ENCODE measurements at regions of chr3 and their contacts with region 1.

Region 1: DNA sequence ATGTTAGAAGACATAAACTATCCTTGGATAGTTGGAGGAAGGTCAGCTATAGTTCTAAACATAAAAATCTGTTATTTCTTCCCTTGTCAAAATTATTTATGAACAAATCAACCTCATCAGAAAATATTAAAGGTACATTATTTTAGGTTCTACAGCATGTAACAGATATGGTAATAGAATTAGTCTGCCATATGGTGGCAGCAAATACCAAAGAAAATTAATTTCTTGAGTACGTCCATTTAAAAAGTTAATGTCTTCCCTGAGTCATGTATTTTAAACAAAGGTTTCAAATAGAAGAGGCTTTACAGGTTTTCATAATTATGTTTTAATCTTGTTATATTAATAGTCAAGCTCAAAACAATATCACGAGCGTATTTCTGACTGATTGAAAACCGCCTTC is 17.9 kb upstream of the ANKRD28 start:
- DNase-seq: no peak
- H3K4me3 Mint-ChIP-seq: no peak overlapping the region
- H3K27ac Mint-ChIP-seq: no peak overlapping the region
- H3K4me1 Mint-ChIP-seq: peaks cover 36% of the 10 kb centered on the region
- H3K27me3 Mint-ChIP-seq: no peaks in the 10 kb centered on the region

Region 2: DNA sequence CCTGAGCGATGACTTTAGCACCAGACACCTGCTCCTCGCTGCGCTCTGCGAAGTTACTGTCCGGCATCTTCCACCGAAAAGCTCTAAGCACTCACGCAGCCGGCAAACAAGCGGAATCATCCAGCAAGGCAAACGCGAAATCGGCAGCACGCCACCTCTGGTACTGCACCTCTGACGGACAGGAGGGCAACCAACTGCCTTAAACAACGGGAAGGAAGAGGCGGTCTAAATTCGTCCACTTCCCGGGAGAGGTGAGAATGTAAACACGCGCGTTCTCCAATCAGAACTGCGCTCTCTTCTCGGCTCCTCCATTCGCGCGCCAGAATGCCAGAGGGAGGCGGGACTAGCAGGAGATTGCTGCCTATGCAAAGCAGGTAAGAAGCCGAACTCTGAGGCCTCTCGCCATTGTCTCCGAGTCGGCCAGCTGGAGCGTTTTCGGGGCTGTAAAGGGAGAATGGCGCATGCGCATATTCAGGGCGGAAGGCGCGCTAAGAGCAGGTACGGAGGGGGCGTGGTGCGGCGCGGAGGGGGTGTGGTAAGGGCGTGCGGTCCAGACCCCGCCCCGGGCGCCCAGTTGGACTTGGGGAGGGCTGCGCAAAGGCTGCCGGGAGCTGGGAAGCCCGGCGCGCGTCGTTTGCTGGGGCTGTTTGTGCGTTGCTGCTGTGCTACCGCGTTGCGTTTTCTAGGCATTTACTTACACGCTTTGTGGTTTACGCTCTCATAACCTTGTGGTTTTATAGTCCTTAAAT is 214.1 kb before region 1 on chr3 and contains the starts of genes BTD and HACL1:
- intact Hi-C with region 1: loop called (anchors 1 kb)
- DNase-seq: peak; percentile 99
- H3K4me3 Mint-ChIP-seq: peak within 1 kb of the TSS; percentile 100
- H3K27ac Mint-ChIP-seq: peak within 1 kb of the TSS; percentile 99
- H3K4me1 Mint-ChIP-seq: peaks cover 28% of the 10 kb centered on the region
- H3K27me3 Mint-ChIP-seq: no peaks in the 10 kb centered on the region
- total RNA-seq, gene BTD: 3.9 and 4.8 TPM in 2 replicates
- total RNA-seq, gene HACL1: 22.8 TPM in 2 replicates

Region 3: DNA sequence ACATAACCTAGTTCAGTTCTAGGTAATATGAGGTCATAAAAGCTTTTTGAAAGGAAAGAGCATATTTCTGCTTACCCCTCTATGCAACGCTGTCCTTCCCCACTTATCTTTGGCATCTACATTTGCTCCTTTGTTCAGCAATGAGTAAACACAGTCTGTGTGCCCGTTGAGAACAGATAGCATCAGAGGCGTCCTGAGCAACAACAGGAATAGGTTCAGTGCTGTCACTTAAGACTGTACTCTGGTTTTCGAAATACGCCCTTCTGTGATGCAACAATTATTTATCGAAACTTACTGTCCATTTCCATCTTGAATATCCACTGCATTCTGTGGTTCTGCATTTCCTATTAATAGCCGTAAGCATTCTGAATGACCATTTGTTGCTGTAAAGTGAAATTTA is 129.8 kb before region 1 on chr3:
- intact Hi-C with region 1: loop called (anchors 5 kb)
- DNase-seq: peak; percentile 20
- H3K4me3 Mint-ChIP-seq: no peak overlapping the region
- H3K27ac Mint-ChIP-seq: no peak overlapping the region
- H3K4me1 Mint-ChIP-seq: peaks cover 35% of the 10 kb centered on the region
- H3K27me3 Mint-ChIP-seq: no peaks in the 10 kb centered on the region

Region 4: GRCh38 chr3:15859507-15860013 is 43.9 kb after region 1 on chr3:
- intact Hi-C with region 1: loop called (anchors 5 kb)
- DNase-seq: peak; percentile 73
- H3K4me3 Mint-ChIP-seq: peak overlapping the region; percentile 94
- H3K27ac Mint-ChIP-seq: peak overlapping the region; percentile 96
- H3K4me1 Mint-ChIP-seq: peaks cover 36% of the 10 kb centered on the region
- H3K27me3 Mint-ChIP-seq: no peaks in the 10 kb centered on the region

Region 5: GRCh38 chr3:15875016-15875689 is 59.5 kb after region 1 on chr3:
- intact Hi-C with region 1: no loop called
- DNase-seq: no peak
- H3K4me3 Mint-ChIP-seq: no peak overlapping the region
- H3K27ac Mint-ChIP-seq: no peak overlapping the region
- H3K4me1 Mint-ChIP-seq: peaks cover 3% of the 10 kb centered on the region
- H3K27me3 Mint-ChIP-seq: no peaks in the 10 kb centered on the region

Region 6: DNA sequence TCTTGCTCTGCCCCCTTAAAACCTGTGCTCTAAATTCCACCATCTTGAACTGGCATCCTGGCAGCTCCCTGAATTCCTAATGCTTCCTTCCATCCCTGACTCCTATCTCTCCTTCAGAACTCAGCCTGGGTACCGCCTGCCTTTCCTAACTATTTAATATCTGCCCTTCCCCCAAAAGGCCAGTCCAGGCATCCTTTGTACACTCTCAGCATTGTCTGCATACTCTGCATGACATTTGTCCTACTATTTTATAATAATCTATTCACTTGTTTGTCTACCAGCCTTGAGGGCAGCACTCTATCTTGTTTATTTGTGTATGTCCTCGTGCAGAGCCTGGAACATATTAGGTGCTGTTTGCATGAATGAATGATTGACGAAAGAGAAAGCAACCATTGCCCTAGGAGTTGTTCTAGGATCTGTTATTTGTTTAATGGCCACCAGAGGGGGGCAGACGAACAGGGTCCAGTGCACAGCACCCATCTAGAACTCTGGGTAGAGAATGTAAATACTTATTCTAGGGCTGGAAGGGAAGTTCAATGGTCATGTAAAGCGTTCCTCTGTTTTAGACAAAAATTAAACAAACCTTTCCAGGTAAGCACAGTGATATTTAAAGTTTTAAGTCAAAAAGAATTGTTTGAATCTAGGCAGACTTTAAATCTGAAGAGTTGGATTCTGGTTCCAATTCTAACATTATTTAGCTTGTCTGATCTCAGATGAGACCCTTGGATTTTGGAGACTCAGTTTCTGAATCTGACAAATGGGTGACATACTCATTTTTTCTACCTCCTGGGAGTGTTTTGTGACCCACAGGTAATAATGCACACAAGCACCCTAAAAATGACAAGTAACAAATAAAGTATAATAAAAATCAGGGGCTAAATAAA is 233.0 kb after region 1 on chr3:
- intact Hi-C with region 1: loop called (anchors 10 kb)
- DNase-seq: peak; percentile 16
- H3K4me3 Mint-ChIP-seq: no peak overlapping the region
- H3K27ac Mint-ChIP-seq: no peak overlapping the region
- H3K4me1 Mint-ChIP-seq: peaks cover 8% of the 10 kb centered on the region
- H3K27me3 Mint-ChIP-seq: peaks cover 2% of the 10 kb centered on the region

Region 7: DNA sequence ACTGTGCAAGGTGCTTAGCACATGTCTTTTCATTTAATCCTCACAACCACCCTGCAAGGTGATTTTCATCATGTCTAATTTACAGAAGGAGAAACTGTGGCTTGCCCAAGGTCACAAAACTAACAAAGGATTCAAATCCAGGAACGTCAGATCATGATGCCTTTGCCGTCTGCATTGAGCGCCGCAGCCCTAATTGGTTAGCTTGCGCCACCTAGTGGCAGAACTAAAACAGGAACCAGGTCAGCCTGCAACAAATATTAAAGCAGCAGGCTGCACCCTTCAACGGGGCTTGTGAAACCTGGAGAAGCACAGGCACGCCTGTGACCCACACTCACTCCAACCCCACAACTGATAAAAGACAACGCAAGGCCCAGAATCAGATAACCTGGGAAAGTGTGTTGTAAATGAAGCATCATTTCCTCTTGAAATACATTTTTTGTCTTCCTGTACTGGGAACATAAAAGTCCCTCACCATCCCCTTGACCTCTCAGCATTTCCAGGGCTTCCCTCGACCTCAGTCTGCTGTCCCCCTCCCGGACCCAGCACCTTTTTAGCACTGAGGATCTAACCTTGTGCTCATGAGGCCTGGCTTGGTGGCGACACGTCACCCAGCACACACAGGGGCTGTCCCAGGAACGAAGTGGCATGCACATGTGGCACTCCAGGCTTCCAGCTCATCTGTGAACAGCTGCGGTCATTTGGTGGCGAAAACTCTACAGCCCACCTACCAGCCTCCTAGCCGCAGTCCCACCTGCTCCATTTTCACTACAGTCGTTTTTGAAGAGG is 431.8 kb after region 1 on chr3:
- intact Hi-C with region 1: loop called (anchors 1 kb)
- DNase-seq: peak; percentile 67
- H3K4me3 Mint-ChIP-seq: no peak overlapping the region
- H3K27ac Mint-ChIP-seq: no peak overlapping the region
- H3K4me1 Mint-ChIP-seq: peaks cover 18% of the 10 kb centered on the region
- H3K27me3 Mint-ChIP-seq: no peaks in the 10 kb centered on the region